GM10248 (cell line): ENCODE measurements at regions of chr19 and their contacts with region 1.

Region 1: GRCh38 chr19:1837625-1838105 is 10.6 kb downstream of the REXO1 start:
- DNase-seq: peak; percentile 85
- CTCF ChIP-seq: peak; percentile 95

Region 2: GRCh38 chr19:1734321-1734966 is 103.2 kb before region 1 on chr19:
- CTCF ChIA-PET with region 1: no interaction called
- POLR2A ChIA-PET with region 1: no interaction called
- DNase-seq: no peak
- CTCF ChIP-seq: no peak

Region 3: DNA sequence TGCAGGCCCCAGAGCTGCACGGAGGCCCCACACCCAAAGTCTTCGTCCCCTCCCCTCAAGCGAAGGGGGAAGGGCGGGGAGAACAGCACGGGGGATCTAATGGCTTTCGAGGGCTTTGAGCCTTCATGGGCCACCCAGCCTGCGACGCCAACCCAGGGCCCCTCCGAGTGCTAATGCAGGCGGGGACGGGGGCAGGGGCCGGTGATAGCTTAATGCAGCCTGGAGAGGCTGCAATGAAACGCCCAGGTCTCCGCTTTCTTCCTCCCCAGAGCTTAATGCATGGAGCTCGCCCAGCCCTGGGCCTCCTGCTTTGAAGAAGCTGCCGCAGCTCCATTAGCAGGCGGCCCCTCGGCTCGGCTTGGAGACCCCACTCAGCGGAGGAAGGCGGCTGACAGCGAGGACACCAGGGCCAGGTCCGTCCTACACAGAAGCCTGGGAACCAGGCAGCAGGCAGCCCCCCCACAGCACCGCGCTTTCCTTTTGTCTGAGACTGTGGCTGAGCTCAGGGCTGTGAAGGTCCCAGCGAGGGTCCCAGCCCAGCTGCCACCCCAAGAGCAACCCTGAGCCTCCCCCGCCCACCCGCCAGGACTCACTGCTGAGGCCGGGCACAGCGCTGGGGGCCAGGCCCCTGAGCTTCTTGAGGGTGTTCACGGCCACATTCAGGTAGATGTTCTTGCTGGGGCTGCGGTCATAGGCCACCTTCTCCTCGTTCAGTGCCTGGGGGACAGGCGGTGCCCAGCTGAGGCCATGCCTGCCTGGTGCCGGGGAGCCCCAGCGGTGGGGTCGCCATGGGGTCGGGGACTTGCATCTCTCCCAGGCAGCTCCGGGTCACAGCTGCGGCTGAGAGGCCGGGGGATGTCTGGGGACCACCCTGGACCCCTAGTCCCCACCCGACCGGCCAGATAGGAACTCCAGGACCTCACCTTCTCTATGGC is 18.1 kb before region 1 on chr19:
- CTCF ChIA-PET with region 1: interaction called, 152 read pairs
- POLR2A ChIA-PET with region 1: no interaction called
- DNase-seq: no peak
- CTCF ChIP-seq: no peak

Region 4: GRCh38 chr19:1825909-1826556 is 11.6 kb before region 1 on chr19:
- CTCF ChIA-PET with region 1: interaction called, 152 read pairs
- POLR2A ChIA-PET with region 1: interaction called, 11 read pairs
- DNase-seq: peak; percentile 90
- CTCF ChIP-seq: peak; percentile 96

Region 5: GRCh38 chr19:1848399-1849131 is 10.9 kb after region 1 on chr19 and contains the start of gene REXO1:
- CTCF ChIA-PET with region 1: interaction called, 21 read pairs
- POLR2A ChIA-PET with region 1: no interaction called
- DNase-seq: peak; percentile 93
- CTCF ChIP-seq: peak; percentile 87

Region 6: GRCh38 chr19:1856698-1857603 is 19.3 kb after region 1 on chr19:
- CTCF ChIA-PET with region 1: interaction called, 12 read pairs
- POLR2A ChIA-PET with region 1: interaction called, 3 read pairs
- DNase-seq: peak; percentile 82
- CTCF ChIP-seq: no peak